Heart right ventricle (tissue), 16 donors: ENCODE measurements at regions of chr17 and their contacts with region 1.

Region 1: GRCh38 chr17:12485361-12485906 is 180.3 kb upstream of the MYOCD start:
- DNase-seq: no peak
- ATAC-seq: no peak
- H3K4me3 ChIP-seq: no peak overlapping the region
- H3K27ac ChIP-seq: no peak overlapping the region
- H3K4me1 ChIP-seq: no peaks in the 10 kb centered on the region
- H3K27me3 ChIP-seq: no peaks in the 10 kb centered on the region
- CTCF ChIP-seq: no peak

Region 2: GRCh38 chr17:12431188-12431587 is 54.2 kb before region 1 on chr17:
- intact Hi-C with region 1: loop called in 1 of 10 experiments (anchors 10 kb)
- DNase-seq: no peak
- ATAC-seq: no peak
- H3K4me3 ChIP-seq: no peak overlapping the region
- H3K27ac ChIP-seq: no peak overlapping the region
- H3K4me1 ChIP-seq: no peaks in the 10 kb centered on the region
- H3K27me3 ChIP-seq: no peaks in the 10 kb centered on the region
- CTCF ChIP-seq: no peak

Region 3: GRCh38 chr17:12549499-12550041 is 64.1 kb after region 1 on chr17:
- intact Hi-C with region 1: no loop called
- DNase-seq: no peak
- ATAC-seq: peak in 7 of 8 donors; percentile 9 to 65 (median 47)
- H3K4me3 ChIP-seq: peak overlapping the region in 9 of 10 donors; percentile 6 to 48 (median 23)
- H3K27ac ChIP-seq: peak overlapping the region; percentile 19 to 86 (median 72)
- H3K4me1 ChIP-seq: peaks cover 0 to 11% (median 0%) of the 10 kb centered on the region in 9 donors
- H3K27me3 ChIP-seq: no peaks in the 10 kb centered on the region
- CTCF ChIP-seq: no peak

Region 4: GRCh38 chr17:13353590-13353989 is 868.2 kb after region 1 on chr17:
- intact Hi-C with region 1: no loop called
- DNase-seq: peak; percentile 24 to 52
- ATAC-seq: peak; percentile 42 to 85 (median 76)
- H3K4me3 ChIP-seq: no peak overlapping the region
- H3K27ac ChIP-seq: peak overlapping the region in 4 of 10 donors; percentile 2 to 52 (median 7)
- H3K4me1 ChIP-seq: peaks cover 0 to 11% (median 0%) of the 10 kb centered on the region in 9 donors
- H3K27me3 ChIP-seq: no peaks in the 10 kb centered on the region
- CTCF ChIP-seq: no peak